ENCODE measurements at regions of chr12 and their contacts with region 1.

Region 1: DNA sequence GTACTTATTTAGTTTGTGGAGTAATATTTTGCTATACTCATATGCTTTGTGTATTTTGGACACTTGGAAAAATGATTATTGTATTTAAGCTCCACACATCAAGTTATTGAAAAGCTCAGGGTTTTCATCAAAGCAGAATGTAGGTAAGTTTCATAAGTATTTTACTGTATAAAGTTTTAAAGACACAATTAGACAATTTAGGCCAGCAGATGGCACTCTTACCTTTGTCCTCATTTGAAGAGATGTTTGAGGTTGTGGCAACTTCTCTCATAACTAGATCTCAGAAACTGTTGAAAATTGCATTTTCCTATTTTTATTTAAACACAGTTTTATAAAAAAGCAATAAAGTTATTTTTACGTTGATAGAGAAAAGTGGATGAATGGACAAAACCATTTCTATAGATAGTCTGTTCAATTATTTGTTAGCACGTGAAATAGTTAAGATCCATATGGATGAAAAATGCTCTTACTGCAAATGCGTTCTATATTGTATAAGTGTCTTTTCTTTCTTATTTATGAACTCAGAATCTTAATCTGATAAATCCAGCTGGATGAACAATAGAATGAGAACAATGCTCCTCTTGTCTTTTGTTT is 300.0 kb downstream of the AEBP2 start:
- DNase-seq: peak in 1 of 2 donors; percentile 62
- ATAC-seq: peak in 1 of 3 donors; percentile 42
- H3K4me3 ChIP-seq: no peak overlapping the region
- H3K4me3 Mint-ChIP-seq: no peak overlapping the region
- H3K27ac ChIP-seq: no peak overlapping the region
- H3K27ac Mint-ChIP-seq: no peak overlapping the region
- H3K4me1 ChIP-seq: no peaks in the 10 kb centered on the region
- H3K4me1 Mint-ChIP-seq: no peaks in the 10 kb centered on the region
- H3K27me3 ChIP-seq: peaks cover 2% of the 10 kb centered on the region
- H3K27me3 Mint-ChIP-seq: peaks cover 4 to 5% of the 10 kb centered on the region in 2 donors
- CTCF ChIP-seq: peak; percentile 70

Region 2: DNA sequence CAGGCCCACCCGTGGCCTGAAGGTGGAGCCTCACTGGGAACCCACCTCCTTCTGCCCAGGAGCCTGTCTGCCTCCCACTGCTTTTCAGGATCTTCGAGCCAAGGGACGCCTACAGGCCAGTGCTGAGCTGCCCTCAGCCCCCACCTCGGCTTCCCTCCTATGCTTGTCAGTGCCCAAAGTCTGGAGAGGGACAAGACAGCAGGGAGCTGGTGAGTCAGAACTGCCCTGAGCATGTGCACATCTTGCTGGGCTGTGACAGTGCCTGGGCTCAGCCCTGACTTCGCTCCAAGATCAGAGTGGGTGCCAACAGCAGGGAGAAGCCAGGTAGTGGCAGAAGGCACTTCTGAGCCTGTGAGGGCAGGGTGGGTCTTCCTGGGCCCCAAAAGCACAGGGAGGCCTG is 13.2 kb before region 1 on chr12:
- intact Hi-C with region 1: no loop called
- DNase-seq: no peak
- ATAC-seq: no peak
- H3K4me3 ChIP-seq: no peak overlapping the region
- H3K4me3 Mint-ChIP-seq: no peak overlapping the region
- H3K27ac ChIP-seq: no peak overlapping the region
- H3K27ac Mint-ChIP-seq: no peak overlapping the region
- H3K4me1 ChIP-seq: no peaks in the 10 kb centered on the region
- H3K4me1 Mint-ChIP-seq: no peaks in the 10 kb centered on the region
- H3K27me3 ChIP-seq: no peaks in the 10 kb centered on the region
- H3K27me3 Mint-ChIP-seq: no peaks in the 10 kb centered on the region
- CTCF ChIP-seq: no peak

Region 3: DNA sequence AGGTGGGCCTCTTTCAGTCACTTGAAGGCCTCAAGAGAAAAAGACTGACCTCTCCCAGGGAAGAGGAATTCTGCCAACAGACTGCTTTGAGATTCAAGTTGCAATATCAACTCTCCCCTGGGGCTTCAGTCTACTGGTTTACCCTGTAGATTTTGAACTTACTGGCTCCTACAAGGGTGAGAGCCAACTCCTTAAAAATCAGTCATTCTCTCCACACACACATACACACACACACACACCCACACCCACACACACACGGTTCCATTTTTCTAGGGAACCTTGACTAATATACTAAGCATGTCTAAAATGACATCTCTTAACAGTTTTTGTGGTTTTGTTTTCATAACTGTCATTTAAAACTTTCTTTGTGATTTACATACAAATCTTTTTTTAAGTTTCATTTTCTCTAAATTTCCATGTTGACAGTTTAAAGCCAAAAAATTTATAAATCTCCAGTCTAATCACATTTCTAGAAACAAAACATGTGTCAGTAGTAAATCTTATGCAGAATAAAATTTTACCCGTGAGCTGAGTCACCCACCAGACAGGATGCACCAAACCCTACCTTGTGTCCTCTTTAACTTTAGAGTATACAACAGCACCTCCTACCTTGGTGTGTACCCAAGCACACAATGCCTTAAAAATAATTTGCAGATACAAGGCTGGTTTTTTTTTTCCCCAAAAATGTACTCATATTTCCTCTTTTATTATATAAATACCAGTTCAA is 94.7 kb after region 1 on chr12:
- intact Hi-C with region 1: loop called (anchors 10 kb)
- DNase-seq: peak in 1 of 2 donors; percentile 4
- ATAC-seq: peak in 1 of 3 donors; percentile 57
- H3K4me3 ChIP-seq: no peak overlapping the region
- H3K4me3 Mint-ChIP-seq: no peak overlapping the region
- H3K27ac ChIP-seq: no peak overlapping the region
- H3K27ac Mint-ChIP-seq: no peak overlapping the region
- H3K4me1 ChIP-seq: no peaks in the 10 kb centered on the region
- H3K4me1 Mint-ChIP-seq: peaks cover 0 to 5% of the 10 kb centered on the region in 2 donors
- H3K27me3 ChIP-seq: no peaks in the 10 kb centered on the region
- H3K27me3 Mint-ChIP-seq: peaks cover 0 to 2% of the 10 kb centered on the region in 2 donors
- CTCF ChIP-seq: no peak

Region 4: GRCh38 chr12:20601668-20602280 is 862.5 kb after region 1 on chr12:
- intact Hi-C with region 1: loop called (anchors 10 kb)
- DNase-seq: no peak
- ATAC-seq: no peak
- H3K4me3 ChIP-seq: no peak overlapping the region
- H3K4me3 Mint-ChIP-seq: no peak overlapping the region
- H3K27ac ChIP-seq: no peak overlapping the region
- H3K27ac Mint-ChIP-seq: no peak overlapping the region
- H3K4me1 ChIP-seq: no peaks in the 10 kb centered on the region
- H3K4me1 Mint-ChIP-seq: no peaks in the 10 kb centered on the region
- H3K27me3 ChIP-seq: no peaks in the 10 kb centered on the region
- H3K27me3 Mint-ChIP-seq: no peaks in the 10 kb centered on the region
- CTCF ChIP-seq: no peak

Region 5: DNA sequence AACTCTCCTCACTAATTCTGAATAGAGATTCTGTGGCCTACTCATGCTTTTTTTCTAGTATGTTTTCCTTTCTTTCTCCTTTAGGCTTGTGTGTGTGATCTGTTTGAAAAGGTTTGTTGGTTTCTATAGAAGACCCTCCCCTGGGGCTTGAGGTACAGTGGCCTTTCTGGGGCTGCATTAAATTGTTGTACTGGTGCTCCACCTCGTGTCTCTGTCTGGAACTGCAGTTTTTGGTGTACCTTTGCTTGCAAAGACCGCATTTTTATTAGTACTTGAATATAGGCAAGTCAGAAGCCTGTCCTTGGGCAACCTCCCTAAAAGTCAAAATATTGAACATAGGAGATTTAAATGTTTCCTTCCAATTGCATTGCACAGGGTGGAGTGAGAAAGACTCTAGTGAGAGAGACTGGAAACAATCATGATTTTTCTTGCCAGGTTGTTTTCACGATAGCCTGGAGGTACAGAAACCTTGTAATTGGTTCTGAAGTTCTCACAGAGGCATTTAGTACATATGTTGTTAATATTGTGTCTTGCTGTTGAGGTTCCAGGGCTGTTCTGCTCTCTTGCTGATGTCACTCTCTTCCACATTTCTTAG is 1430.7 kb after region 1 on chr12:
- intact Hi-C with region 1: loop called (anchors 5 kb)
- DNase-seq: peak in 1 of 2 donors; percentile 28
- ATAC-seq: no peak
- H3K4me3 ChIP-seq: no peak overlapping the region
- H3K4me3 Mint-ChIP-seq: no peak overlapping the region
- H3K27ac ChIP-seq: no peak overlapping the region
- H3K27ac Mint-ChIP-seq: no peak overlapping the region
- H3K4me1 ChIP-seq: no peaks in the 10 kb centered on the region
- H3K4me1 Mint-ChIP-seq: no peaks in the 10 kb centered on the region
- H3K27me3 ChIP-seq: no peaks in the 10 kb centered on the region
- H3K27me3 Mint-ChIP-seq: no peaks in the 10 kb centered on the region
- CTCF ChIP-seq: peak; percentile 37

Region 6: GRCh38 chr12:21683115-21683514 is 1943.8 kb after region 1 on chr12:
- intact Hi-C with region 1: loop called (anchors 5 kb)
- DNase-seq: no peak
- ATAC-seq: no peak
- H3K4me3 ChIP-seq: no peak overlapping the region
- H3K4me3 Mint-ChIP-seq: no peak overlapping the region
- H3K27ac ChIP-seq: no peak overlapping the region
- H3K27ac Mint-ChIP-seq: no peak overlapping the region
- H3K4me1 ChIP-seq: no peaks in the 10 kb centered on the region
- H3K4me1 Mint-ChIP-seq: no peaks in the 10 kb centered on the region
- H3K27me3 ChIP-seq: no peaks in the 10 kb centered on the region
- H3K27me3 Mint-ChIP-seq: peaks cover 7 to 9% of the 10 kb centered on the region in 2 donors
- CTCF ChIP-seq: no peak